Activated T-helper 1 cell treated with anti-CD3 and anti-CD28 coated beads, Interleukin-12 subunit alpha, Interleukin-12 subunit beta, Interleukin-2, Interleukin-4 antibody, amounts not matched to agents 30 ng/mL and 10 ng/mL and 1 ng/mL, durations not matched to agents 14 hours and 24 hours and 36 hours (primary cell): ENCODE measurements at regions of chr2 and their contacts with region 1.

Region 1: DNA sequence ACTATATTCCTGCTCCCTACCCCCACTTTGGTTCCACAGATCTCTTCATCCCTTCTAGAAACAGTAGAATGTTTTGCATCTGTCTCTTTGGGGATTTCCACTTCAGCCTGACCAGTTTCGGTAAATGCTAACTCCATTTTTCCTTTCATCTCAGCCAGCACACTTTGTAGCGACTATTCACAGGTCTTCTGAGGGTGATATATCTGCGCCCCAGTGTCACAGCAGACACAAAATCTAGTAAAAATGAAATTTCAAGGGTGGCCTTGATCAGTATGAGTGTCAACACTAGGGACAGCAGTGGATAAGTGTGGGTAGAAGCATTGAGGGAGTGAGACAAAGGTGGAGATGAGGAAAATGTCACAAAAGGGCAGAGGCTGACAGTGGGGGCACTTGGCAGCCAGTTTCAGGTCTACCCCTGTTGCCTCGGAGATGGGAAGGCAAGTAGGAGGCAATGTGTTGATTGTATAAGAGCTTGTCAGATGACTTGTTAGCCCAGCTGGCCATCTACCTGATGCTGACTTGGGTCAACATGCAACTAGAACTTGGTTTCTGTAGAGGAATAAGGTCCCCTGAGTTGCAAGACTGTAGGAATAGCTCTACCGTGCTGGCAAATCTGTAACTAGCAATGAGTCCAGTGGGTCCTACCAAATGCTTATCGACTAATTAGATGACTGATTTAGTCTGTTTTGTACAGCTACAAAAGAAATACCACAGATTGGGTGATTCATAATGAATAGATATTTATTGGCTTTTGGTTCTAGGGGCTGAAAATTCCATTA is 60.7 kb downstream of the CXCR4 start:
- DNase-seq: peak; percentile 65
- H3K4me3 Mint-ChIP-seq: peak overlapping the region; percentile 43
- H3K27ac Mint-ChIP-seq: peak overlapping the region; percentile 90
- H3K4me1 Mint-ChIP-seq: peaks cover 87% of the 10 kb centered on the region
- H3K27me3 Mint-ChIP-seq: no peaks in the 10 kb centered on the region

Region 2: GRCh38 chr2:135876066-135876711 is 181.0 kb before region 1 on chr2 and contains the start of gene MCM6:
- intact Hi-C with region 1: loop called (anchors 1 kb)
- DNase-seq: peak; percentile 99
- H3K4me3 Mint-ChIP-seq: peak within 1 kb of the TSS; percentile 98
- H3K27ac Mint-ChIP-seq: peak within 1 kb of the TSS; percentile 99
- H3K4me1 Mint-ChIP-seq: peaks cover 45% of the 10 kb centered on the region
- H3K27me3 Mint-ChIP-seq: peaks cover 2% of the 10 kb centered on the region
- total RNA-seq, gene MCM6: 176 and 177 TPM in 2 replicates

Region 3: DNA sequence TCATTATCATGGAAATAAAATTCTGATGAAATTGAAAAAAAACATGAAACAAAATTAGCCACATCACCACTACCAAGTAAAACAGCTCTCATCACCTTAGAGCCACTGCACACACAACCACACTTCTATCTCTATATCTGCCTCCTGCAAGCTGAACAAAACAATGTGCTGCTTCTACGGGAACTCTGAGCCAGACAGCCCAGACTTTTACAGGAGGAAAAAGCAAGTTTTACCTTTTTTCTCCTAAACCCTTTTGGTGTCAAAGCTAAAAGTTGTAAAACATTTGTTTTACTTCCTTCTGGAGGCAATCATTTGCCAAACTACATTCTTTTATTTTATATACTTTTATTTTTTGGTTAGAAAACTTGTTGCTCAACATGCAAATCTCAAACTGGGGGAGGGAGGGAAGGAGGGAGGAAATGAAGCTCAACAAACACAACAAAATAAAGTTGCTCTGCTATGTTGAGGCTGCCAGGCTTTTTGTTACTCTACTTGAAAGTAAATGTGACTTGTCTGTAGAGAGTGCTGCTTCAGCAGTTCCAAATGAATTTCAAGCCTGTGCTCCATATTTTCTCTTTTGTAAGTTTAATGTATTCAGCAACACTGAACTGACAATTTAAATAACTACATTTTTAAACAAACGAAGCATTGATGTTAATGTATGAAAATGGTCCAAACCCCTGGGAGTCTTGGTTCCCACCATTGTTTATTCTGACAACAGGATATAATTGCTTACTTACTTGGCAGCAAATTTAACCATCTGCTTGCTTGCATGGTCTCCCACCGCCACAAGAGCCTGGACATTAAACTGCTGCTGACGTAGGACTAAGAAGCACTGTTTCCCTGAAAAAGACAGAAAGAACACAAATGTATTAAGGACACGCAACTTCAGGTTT is 96.3 kb before region 1 on chr2:
- intact Hi-C with region 1: loop called (anchors 1 kb)
- DNase-seq: peak; percentile 16
- H3K4me3 Mint-ChIP-seq: peak overlapping the region; percentile 28
- H3K27ac Mint-ChIP-seq: peak overlapping the region; percentile 80
- H3K4me1 Mint-ChIP-seq: peaks cover 55% of the 10 kb centered on the region
- H3K27me3 Mint-ChIP-seq: no peaks in the 10 kb centered on the region

Region 4: GRCh38 chr2:136068581-136069227 is 11.5 kb after region 1 on chr2:
- intact Hi-C with region 1: loop called (anchors 1 kb)
- DNase-seq: no peak
- H3K4me3 Mint-ChIP-seq: peak overlapping the region; percentile 49
- H3K27ac Mint-ChIP-seq: peak overlapping the region; percentile 46
- H3K4me1 Mint-ChIP-seq: peaks cover 63% of the 10 kb centered on the region
- H3K27me3 Mint-ChIP-seq: no peaks in the 10 kb centered on the region

Region 5: DNA sequence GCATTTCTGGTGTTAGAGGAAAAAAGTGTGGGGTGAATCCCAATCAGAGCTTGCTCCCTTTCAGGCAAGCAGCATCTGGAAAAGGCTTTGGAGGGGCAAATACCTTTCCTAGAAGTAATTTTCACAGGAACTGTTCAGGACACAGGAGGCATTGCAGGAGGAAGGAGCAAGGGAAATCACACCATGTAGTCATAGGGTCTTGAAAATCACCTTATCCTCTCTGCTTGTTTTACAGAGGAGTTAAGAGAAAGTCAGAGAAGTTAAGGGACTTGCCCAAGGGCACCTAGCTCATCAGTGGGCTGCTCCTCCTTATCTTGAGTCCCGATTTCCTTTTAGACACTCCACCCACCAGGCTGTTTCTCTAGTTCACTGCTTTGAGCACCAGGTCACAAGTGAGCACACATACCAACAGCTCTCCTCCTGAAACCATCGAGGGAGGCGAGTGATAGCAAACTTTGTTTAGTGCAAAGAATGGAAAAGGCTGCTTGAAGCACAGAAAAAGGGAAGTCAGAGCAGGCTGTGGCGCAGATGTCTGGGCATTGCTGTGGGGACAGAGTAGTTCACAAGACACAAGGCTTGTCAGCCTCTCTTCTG is 149.9 kb after region 1 on chr2:
- intact Hi-C with region 1: loop called (anchors 2 kb)
- DNase-seq: no peak
- H3K4me3 Mint-ChIP-seq: no peak overlapping the region
- H3K27ac Mint-ChIP-seq: peak overlapping the region; percentile 92
- H3K4me1 Mint-ChIP-seq: peaks cover 33% of the 10 kb centered on the region
- H3K27me3 Mint-ChIP-seq: peaks cover 2% of the 10 kb centered on the region

Region 6: GRCh38 chr2:136319651-136320050 is 262.4 kb after region 1 on chr2:
- intact Hi-C with region 1: loop called (anchors 1 kb)
- DNase-seq: no peak
- H3K4me3 Mint-ChIP-seq: peak overlapping the region; percentile 45
- H3K27ac Mint-ChIP-seq: peak overlapping the region; percentile 77
- H3K4me1 Mint-ChIP-seq: peaks cover 51% of the 10 kb centered on the region
- H3K27me3 Mint-ChIP-seq: peaks cover 2% of the 10 kb centered on the region

Region 7: DNA sequence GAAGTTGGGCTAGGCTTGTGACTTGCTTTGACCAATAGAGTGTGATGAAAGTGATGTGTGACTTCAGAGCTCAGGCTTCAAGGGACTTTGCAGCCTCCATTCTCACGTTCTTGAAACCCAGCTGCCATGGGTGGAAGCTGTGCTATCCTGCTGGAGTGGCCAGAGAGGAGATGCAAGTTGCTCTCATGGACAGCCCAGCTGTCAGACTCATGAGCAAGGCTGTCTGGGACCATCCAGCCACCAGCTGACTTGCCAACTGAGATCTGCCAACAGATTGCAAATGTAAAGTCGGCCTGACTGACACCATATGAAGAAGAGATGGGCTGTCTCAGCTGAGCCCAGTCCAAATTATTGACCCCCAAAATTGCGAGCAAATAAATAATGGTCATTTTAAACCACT is 287.1 kb after region 1 on chr2:
- intact Hi-C with region 1: no loop called
- DNase-seq: no peak
- H3K4me3 Mint-ChIP-seq: no peak overlapping the region
- H3K27ac Mint-ChIP-seq: no peak overlapping the region
- H3K4me1 Mint-ChIP-seq: no peaks in the 10 kb centered on the region
- H3K27me3 Mint-ChIP-seq: no peaks in the 10 kb centered on the region

Region 8: GRCh38 chr2:136378712-136379595 is 321.7 kb after region 1 on chr2:
- intact Hi-C with region 1: loop called (anchors 1 kb)
- DNase-seq: peak; percentile 70
- H3K4me3 Mint-ChIP-seq: no peak overlapping the region
- H3K27ac Mint-ChIP-seq: no peak overlapping the region
- H3K4me1 Mint-ChIP-seq: peaks cover 80% of the 10 kb centered on the region
- H3K27me3 Mint-ChIP-seq: no peaks in the 10 kb centered on the region